ENCODE measurements at regions of chr1 and their contacts with region 1.

Region 1: DNA sequence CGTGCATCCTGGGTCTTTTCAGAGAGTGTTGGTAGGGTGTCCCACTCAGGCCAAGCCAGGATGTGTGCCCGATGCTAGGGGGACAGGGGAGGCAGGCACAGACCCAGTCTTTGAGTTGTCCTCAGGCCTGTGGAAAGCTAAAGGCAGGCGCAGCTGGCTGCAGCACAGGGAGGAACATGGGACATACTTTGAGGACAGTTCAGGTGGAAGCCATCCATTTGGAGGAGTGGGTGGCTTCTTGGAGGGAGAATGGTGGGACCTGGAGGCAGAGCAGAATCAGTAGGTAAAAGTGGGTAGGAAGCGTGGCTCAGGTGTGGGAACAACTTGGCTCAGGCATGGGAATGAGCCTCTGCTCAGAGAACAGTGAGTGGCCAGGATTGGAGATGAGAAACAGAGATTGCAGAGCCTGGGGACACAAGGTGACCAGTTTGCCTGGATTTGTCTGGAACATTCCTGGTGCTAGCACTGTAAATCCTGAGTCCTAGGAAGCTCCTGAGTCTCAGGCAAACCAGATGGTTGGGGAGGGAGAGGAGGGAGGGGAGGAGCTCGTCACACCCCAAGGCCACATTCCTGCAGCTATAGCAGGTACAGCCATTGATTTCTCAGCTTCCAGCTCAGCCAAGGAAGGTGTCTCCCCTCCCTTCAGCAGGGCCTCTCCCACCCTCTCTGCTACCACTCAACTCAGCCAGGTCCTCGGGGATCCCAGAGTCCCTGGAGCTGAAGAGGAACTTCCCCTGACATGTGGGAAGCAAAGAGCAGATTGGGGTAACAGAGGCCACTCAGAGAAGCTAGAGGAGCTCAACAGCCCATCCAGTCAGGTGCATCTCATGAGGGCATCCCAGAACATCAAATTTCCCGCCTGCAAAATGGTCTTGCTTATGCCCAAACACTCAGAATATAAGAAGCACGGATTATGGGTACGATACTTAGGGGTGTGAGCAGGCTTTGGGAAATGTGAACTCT is 65.2 kb upstream of the TINAGL1 start:
- DNase-seq: no peak
- H3K4me3 ChIP-seq: no peak overlapping the region
- H3K27ac ChIP-seq: no peak overlapping the region
- H3K4me1 ChIP-seq: peaks cover 0 to 1% (median 0%) of the 10 kb centered on the region in 4 experiments; a peak in 2 of 7 replicates
- H3K27me3 ChIP-seq: no peaks in the 10 kb centered on the region
- CTCF ChIP-seq: no peak
- EP300 ChIP-seq: no peak
- POLR2A ChIP-seq: no peak
- RAD21 ChIP-seq: no peak

Region 2: GRCh38 chr1:31460027-31460426 is 51.1 kb before region 1 on chr1:
- CTCF ChIA-PET with region 1: interaction called, 16 read pairs
- POLR2A ChIA-PET with region 1: no interaction called
- DNase-seq: no peak
- H3K4me3 ChIP-seq: no peak overlapping the region
- H3K27ac ChIP-seq: no peak overlapping the region
- H3K4me1 ChIP-seq: peaks cover 0 to 5% (median 0%) of the 10 kb centered on the region in 4 experiments; a peak in 2 of 7 replicates
- H3K27me3 ChIP-seq: no peaks in the 10 kb centered on the region; a peak in 1 of 7 replicates
- CTCF ChIP-seq: peak in 2 of 3 experiments; percentile 43 to 51; a peak in 2 of 4 replicates
- EP300 ChIP-seq: no peak
- POLR2A ChIP-seq: no peak
- RAD21 ChIP-seq: peak; percentile 66 to 73

Region 3: GRCh38 chr1:31523769-31524168 is 12.6 kb after region 1 on chr1:
- CTCF ChIA-PET with region 1: interaction called, 12 read pairs
- POLR2A ChIA-PET with region 1: interaction called, 3 read pairs
- DNase-seq: no peak
- H3K4me3 ChIP-seq: no peak overlapping the region
- H3K27ac ChIP-seq: no peak overlapping the region
- H3K4me1 ChIP-seq: no peaks in the 10 kb centered on the region
- H3K27me3 ChIP-seq: no peaks in the 10 kb centered on the region
- CTCF ChIP-seq: no peak
- EP300 ChIP-seq: no peak
- POLR2A ChIP-seq: no peak
- RAD21 ChIP-seq: no peak